GM12878 (cell line): ENCODE measurements at regions of chr2 and their contacts with region 1.

Region 1: GRCh38 chr2:42169100-42169873 is at the start of gene EML4:
- DNase-seq: peak; percentile 52
- ATAC-seq: peak; percentile 79
- H3K4me3 ChIP-seq: peak within 1 kb of the TSS; percentile 92
- H3K27ac ChIP-seq: peak within 1 kb of the TSS; percentile 82
- H3K4me1 ChIP-seq: peaks cover 3% of the 10 kb centered on the region
- H3K27me3 ChIP-seq: no peaks in the 10 kb centered on the region
- CTCF ChIP-seq: no peak
- EP300 ChIP-seq: no peak
- POLR2A ChIP-seq: peak; percentile 92
- RAD21 ChIP-seq: no peak
- polyA plus RNA-seq, gene EML4: 23.1 to 30.8 TPM

Region 2: DNA sequence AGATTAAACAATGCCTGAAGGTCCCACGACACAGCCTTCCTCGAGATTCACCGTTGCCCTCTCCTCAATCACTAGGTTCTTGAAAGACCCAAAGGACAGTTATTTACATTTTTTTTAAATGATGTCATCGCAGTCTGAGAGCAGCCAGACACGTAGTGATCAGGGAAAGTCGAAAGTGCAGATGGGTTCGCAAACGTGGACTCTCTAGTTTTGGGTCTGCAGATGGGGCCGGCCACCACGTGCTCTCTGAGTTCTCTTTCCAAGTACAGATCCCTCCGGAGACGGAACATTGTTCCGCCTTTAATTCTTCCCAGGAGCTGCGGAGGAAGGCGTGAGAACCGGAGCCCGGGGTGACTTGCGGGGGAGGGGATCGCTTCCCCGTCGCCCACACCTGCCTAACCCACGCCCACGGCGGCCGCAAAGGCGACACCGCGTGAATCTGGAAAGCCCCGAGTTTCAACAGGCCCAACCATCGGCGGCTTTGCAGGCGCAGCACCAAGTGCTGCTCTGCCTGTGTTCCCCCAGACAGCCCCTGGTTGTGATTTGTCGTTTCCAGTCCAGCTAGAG is 67.2 kb before region 1 on chr2:
- CTCF ChIA-PET with region 1: interaction called, 6 read pairs
- POLR2A ChIA-PET with region 1: interaction called, 28 read pairs
- RAD21 ChIA-PET with region 1: interaction called, 21 read pairs
- SMC1A ChIA-PET with region 1: interaction called, 48 read pairs
- in situ Hi-C with region 1: loop called (anchors 5 kb)
- intact Hi-C with region 1: loop called (anchors 1 kb)
- DNase-seq: peak; percentile 82
- ATAC-seq: peak; percentile 74
- H3K4me3 ChIP-seq: peak overlapping the region; percentile 47; the same call in 1 of the 2 replicates
- H3K27ac ChIP-seq: peak overlapping the region; percentile 94
- H3K4me1 ChIP-seq: peaks cover 81% of the 10 kb centered on the region
- H3K27me3 ChIP-seq: no peaks in the 10 kb centered on the region
- CTCF ChIP-seq: no peak
- EP300 ChIP-seq: peak; percentile 87 to 91
- POLR2A ChIP-seq: peak; percentile 71
- RAD21 ChIP-seq: no peak

Region 3: DNA sequence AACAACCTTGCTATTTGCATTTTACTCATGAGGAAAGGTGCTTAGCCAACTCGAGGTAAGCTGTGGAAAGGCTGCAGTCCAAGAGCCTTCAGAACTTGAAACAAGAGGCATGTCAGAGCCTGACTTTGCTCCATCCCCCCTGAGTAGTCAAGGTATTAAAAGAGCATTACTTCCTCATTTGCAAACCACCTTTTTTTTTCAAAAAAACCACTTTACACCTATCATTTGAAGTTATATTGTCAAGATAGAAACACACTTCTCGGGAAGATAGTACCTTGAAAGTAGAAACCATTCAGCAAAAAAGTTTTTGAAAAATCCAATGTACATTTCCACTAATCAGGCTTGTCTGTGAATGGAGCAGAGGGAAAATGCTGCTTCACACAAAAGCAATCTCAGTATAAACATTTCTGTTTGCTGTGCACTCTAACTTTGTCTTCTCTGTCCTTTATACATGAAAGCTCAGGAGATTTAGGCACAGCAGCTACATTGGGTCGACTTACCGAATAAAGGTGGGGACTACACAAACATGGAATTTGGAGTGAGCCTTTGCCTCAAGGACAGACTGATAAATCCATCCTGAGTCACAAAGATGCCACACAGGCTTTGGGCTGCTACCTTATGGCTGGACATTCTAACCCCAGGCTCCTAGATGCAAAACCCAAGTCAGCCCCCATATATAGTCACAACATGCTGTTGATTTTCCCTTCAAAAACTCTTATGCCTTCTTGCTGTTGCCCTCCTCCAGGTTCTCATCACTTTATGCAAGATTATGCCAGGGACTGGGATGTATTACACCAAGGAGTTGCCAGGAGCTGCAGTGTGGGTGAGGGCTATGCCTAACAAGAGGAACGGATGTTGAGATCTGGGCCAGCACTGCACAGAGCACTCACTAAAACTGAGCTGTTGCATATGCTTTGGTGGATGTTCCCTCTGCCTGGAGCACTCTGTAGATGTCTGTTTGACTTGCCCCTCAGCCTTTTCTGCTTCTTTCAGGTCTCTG is 41.6 kb before region 1 on chr2:
- CTCF ChIA-PET with region 1: interaction called, 10 read pairs
- POLR2A ChIA-PET with region 1: interaction called, 45 read pairs
- RAD21 ChIA-PET with region 1: interaction called, 41 read pairs
- SMC1A ChIA-PET with region 1: interaction called, 63 read pairs
- in situ Hi-C with region 1: no loop called
- intact Hi-C with region 1: loop called (anchors 2 kb)
- DNase-seq: peak; percentile 83
- ATAC-seq: peak; percentile 77
- H3K4me3 ChIP-seq: peak overlapping the region; percentile 47
- H3K27ac ChIP-seq: peak overlapping the region; percentile 73
- H3K4me1 ChIP-seq: peaks cover 63% of the 10 kb centered on the region
- H3K27me3 ChIP-seq: no peaks in the 10 kb centered on the region
- CTCF ChIP-seq: no peak
- EP300 ChIP-seq: peak; percentile 69 to 70; a peak in 2 of 4 replicates
- POLR2A ChIP-seq: 0 out of 2 replicates have a peak, but pooled peaks have one; percentile 32
- RAD21 ChIP-seq: peak; percentile 28; the same call in 1 of the 2 replicates

Region 4: DNA sequence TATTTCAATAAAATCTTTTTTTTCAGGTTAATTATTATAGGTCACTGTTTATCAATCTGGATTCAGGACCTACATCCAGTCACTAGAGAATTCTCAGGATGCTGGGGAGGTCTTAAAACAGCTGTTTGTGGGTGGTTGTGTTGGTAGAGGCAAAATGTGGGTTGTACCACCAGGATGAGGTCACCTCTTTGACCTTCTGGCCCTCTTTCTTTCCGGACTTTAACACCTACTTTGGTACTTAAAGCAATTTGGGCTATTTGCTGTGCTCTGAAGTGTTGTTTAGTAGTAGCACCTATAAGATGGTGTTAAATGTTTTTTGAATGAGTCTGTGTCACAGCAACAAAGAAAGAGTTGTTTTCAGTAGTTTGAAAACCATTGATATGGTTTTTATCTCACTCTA is 14.5 kb after region 1 on chr2:
- CTCF ChIA-PET with region 1: interaction called, 23 read pairs
- POLR2A ChIA-PET with region 1: interaction called, 25 read pairs
- RAD21 ChIA-PET with region 1: interaction called, 18 read pairs
- SMC1A ChIA-PET with region 1: interaction called, 60 read pairs
- in situ Hi-C with region 1: no loop called
- intact Hi-C with region 1: no loop called
- DNase-seq: no peak
- ATAC-seq: peak; percentile 75
- H3K4me3 ChIP-seq: no peak overlapping the region
- H3K27ac ChIP-seq: 0 out of 2 replicates have a peak overlapping the region, but pooled peaks have one; percentile 35
- H3K4me1 ChIP-seq: peaks cover 3% of the 10 kb centered on the region; the same call in 1 of the 2 replicates
- H3K27me3 ChIP-seq: no peaks in the 10 kb centered on the region
- CTCF ChIP-seq: no peak
- EP300 ChIP-seq: no peak
- POLR2A ChIP-seq: no peak
- RAD21 ChIP-seq: no peak

Region 5: GRCh38 chr2:42196403-42197267 is 27.3 kb after region 1 on chr2:
- CTCF ChIA-PET with region 1: interaction called, 34 read pairs
- POLR2A ChIA-PET with region 1: interaction called, 3 read pairs
- RAD21 ChIA-PET with region 1: interaction called, 32 read pairs
- SMC1A ChIA-PET with region 1: interaction called, 42 read pairs
- in situ Hi-C with region 1: no loop called
- intact Hi-C with region 1: loop called (anchors 2 kb)
- DNase-seq: peak; percentile 11
- ATAC-seq: peak; percentile 78
- H3K4me3 ChIP-seq: no peak overlapping the region
- H3K27ac ChIP-seq: no peak overlapping the region
- H3K4me1 ChIP-seq: peaks cover 19% of the 10 kb centered on the region; the same call in 1 of the 2 replicates
- H3K27me3 ChIP-seq: no peaks in the 10 kb centered on the region
- CTCF ChIP-seq: peak; percentile 48 to 76 (median 52); a peak in 5 of 6 replicates
- EP300 ChIP-seq: no peak
- POLR2A ChIP-seq: no peak
- RAD21 ChIP-seq: peak; percentile 68

Region 6: DNA sequence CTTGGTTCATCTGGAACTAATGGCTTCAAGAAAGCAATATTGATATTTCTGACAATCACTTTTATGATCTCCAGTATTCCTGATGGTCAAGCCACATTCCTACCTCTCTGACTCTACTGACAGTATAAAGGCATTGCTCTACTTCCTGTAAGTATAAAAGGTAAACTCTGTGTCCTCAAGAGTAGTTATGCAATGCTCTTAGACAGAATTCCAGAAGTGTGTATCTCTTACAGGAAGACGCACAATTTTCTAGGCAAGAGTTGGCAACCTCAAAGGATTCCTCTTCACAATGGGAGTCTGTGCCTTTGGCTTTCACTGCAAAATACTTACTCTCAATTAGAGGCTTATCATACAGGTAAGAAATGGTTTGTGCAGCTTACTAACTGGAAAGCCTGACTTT is 1326.4 kb after region 1 on chr2:
- CTCF ChIA-PET with region 1: no interaction called
- POLR2A ChIA-PET with region 1: no interaction called
- RAD21 ChIA-PET with region 1: no interaction called
- SMC1A ChIA-PET with region 1: no interaction called
- in situ Hi-C with region 1: no loop called
- intact Hi-C with region 1: no loop called
- DNase-seq: no peak
- ATAC-seq: no peak
- H3K4me3 ChIP-seq: no peak overlapping the region
- H3K27ac ChIP-seq: no peak overlapping the region
- H3K4me1 ChIP-seq: no peaks in the 10 kb centered on the region
- H3K27me3 ChIP-seq: no peaks in the 10 kb centered on the region
- CTCF ChIP-seq: no peak
- EP300 ChIP-seq: no peak
- POLR2A ChIP-seq: no peak
- RAD21 ChIP-seq: no peak